ENCODE measurements at regions of chr19 and their contacts with region 1.

Region 1: GRCh38 chr19:13353625-13354024 is 152.7 kb downstream of the CACNA1A start:
- DNase-seq: no peak
- ATAC-seq: no peak
- H3K4me3 ChIP-seq: no peak overlapping the region
- H3K27ac ChIP-seq: no peak overlapping the region
- H3K4me1 ChIP-seq: no peaks in the 10 kb centered on the region
- H3K27me3 ChIP-seq: no peaks in the 10 kb centered on the region
- CTCF ChIP-seq: no peak
- POLR2A ChIP-seq: no peak
- RAD21 ChIP-seq: no peak

Region 2: DNA sequence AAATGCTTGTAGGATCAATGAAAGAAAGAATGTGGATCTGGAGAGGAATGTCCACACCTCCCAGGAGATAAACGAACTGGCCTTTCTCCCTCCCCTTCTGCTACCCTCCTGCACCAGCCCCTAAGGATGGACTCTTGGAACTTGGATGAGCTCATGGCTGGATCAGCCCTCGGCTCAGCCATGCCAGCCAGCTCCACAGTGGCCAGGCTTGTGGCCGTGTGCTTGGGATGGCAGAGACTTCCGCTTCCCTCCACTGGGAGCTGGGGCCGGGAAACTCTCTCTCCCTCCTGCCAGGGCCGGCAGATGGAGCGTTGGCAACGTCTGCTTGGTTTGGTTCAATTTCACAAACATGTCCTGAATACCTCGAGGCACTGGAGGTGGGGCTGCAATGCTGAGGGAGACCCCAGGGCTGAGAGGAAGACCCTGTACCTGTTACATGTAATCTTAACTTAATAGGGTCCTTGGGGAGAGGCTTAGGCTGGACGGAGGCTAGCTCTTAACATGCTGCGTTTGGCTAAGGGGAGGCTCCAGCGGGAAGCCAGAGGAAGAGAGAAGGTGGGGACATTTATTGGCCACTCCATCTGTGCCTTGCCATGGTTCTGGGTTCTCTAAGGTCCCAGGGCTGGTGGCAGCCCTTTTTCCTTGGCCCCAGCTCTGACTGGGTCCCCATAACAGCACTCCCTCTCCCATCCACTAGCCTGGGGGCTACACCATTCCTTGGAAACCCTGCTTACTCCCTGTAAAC is 50.9 kb before region 1 on chr19:
- CTCF ChIA-PET with region 1: no interaction called
- POLR2A ChIA-PET with region 1: no interaction called
- RAD21 ChIA-PET with region 1: no interaction called
- intact Hi-C with region 1: loop called (anchors 2 kb)
- DNase-seq: no peak
- ATAC-seq: peak; percentile 50
- H3K4me3 ChIP-seq: no peak overlapping the region
- H3K27ac ChIP-seq: no peak overlapping the region
- H3K4me1 ChIP-seq: peaks cover 0 to 6% of the 10 kb centered on the region in 2 experiments; a peak in 1 of 4 replicates
- H3K27me3 ChIP-seq: no peaks in the 10 kb centered on the region
- CTCF ChIP-seq: no peak
- POLR2A ChIP-seq: no peak
- RAD21 ChIP-seq: no peak

Region 3: DNA sequence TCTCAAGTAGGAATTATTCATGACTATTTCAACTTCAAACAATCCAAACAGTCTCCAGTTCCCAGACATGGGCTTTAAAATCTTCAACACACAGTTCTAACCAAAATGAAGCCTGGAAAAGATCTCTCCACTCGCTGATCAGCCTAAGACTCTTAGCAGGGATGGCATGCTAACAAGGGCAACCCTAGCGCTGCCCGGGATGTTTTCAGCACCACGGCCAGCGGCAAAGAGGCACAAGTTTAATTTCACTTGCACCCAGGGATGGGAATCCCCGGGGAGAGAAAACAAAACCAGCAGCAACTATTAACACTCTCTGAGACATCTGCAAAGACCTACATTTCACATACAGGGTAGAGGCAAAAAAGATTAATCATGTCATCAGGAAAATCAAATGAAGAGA is 109.7 kb after region 1 on chr19:
- CTCF ChIA-PET with region 1: no interaction called
- POLR2A ChIA-PET with region 1: no interaction called
- RAD21 ChIA-PET with region 1: no interaction called
- intact Hi-C with region 1: no loop called
- DNase-seq: no peak
- ATAC-seq: no peak
- H3K4me3 ChIP-seq: no peak overlapping the region
- H3K27ac ChIP-seq: no peak overlapping the region
- H3K4me1 ChIP-seq: no peaks in the 10 kb centered on the region
- H3K27me3 ChIP-seq: peaks cover 43% of the 10 kb centered on the region
- CTCF ChIP-seq: no peak
- POLR2A ChIP-seq: no peak
- RAD21 ChIP-seq: no peak

Measured in HCT116 (cell line).